Cardiac septum (tissue), 1 donor: ENCODE measurements at regions of chr9 and their contacts with region 1.

Region 1: GRCh38 chr9:114207034-114207810 is 51.9 kb downstream of the COL27A1 start:
- DNase-seq: peak; percentile 82

Region 2: DNA sequence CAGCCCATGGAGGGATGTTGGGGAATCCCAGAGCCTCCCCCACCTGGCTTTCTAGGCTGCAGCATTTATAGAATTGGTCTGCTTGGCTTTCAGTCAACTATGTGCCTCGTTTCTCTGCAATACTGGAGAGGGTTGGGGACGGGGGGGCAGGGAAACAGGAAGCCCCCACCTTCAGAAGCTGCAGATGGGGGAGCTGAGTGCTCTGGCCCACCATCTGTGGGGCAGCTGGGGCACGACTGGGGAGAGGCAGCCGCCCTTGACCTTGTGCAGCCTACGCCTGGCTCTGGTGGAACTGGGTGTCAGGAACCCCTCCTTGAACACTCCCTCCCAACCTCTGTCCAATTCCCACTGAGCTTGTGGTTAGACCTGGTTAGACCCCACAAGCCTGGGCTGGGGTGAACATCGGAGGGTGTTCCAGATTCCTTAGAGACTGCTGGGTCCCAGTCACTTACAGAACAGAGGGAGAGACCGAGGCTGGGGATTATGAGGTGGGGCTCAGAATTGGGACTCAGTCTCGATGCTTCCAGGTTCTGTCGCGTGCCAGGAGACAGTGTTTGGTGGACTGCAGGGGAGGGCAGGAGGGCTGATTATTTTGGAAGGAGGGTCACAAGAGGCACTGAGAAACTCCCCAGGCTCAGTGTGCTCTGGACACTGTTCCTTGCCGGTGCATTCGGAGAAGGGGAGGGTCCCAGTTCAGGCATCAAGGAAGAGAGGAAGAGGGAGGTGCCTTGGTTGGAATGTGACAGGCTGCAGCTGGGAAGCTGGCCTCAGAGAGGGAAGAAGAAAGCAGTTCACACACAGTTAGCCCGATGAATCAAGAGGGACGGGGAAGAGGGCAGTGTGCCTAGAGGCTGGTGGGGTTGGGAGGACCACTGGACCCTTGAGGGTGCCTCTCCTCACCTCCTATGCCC is 26.3 kb before region 1 on chr9:
- intact Hi-C with region 1: loop called (anchors 1 kb)
- DNase-seq: no peak

Region 3: GRCh38 chr9:114250235-114250568 is 43.0 kb after region 1 on chr9:
- intact Hi-C with region 1: loop called (anchors 1 kb)
- DNase-seq: peak; percentile 84

Region 4: GRCh38 chr9:114271641-114272081 is 64.4 kb after region 1 on chr9:
- intact Hi-C with region 1: no loop called
- DNase-seq: no peak

Region 5: DNA sequence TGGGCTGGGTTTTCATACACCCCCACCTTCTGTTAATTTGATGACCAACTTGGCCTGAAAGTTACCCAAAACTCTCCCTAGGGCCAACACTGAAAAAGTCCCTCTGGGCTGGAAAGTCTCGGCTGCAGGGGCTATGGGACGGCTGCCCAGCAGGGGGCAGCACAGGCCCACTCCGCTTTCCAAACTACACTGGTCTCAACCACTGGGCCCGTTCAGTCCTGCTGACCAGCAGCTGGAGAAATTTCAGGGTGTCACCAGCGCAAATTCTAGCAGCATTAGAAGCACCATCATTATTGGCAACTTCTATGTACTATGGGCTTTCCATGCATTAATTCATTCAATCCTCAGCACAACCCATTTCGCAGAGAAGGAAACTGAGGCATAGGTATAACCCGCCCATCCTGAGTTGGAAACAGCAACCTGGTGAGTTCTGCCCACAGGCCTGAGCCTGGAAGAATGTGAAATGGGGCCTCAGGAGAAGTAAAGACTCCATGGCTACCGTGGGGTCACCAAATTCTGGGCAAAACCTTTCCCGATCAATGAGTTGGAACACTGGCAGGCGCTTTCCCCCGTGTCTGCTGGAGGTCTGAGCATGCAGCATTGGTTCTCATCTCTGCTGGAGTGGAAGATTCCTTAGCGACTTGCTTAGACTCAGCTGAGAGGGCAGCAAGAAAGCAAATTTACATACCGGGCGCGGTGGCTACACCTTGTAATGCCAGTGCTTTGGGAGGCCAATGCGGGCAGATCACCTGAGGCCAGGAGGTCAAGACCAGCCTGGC is 132.1 kb after region 1 on chr9:
- intact Hi-C with region 1: no loop called
- DNase-seq: no peak

Region 6: DNA sequence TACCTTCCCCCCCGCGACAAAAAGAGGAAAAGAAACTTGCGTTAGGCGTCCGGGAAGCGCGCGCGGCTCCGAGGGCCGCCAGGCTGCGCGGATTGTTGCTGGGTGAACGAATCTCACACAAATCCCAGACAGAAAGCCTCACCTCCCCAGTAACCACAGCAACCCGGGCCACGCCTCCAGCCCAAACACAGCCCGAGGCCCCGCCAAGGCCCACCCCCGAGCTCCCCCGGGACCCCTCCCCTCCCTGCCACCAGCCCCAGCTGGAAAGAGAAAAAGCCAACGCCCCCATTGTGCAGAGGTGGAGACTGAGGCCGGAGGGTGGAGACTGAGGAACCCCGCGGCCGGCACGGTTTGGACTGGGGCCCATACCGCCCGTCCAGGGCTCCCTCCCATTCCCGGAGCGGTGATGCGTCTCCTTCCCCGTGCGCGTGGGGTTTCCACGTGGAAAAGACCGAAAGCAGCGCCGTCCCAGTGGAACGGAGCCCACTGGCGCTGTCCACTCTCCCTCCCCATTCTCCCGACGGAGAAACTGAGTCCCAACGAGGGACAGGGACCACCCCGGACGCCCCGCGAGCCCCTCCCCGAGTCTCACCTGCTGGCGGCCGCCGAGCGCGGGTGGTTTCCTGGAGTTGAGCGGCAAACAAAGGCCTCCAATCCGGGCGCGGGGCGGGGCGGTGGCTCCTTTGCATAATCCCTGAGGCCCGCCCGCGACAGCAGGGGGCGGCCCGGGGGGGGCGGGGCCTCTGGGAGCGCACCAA is 190.8 kb after region 1 on chr9:
- intact Hi-C with region 1: no loop called
- DNase-seq: peak; percentile 98

Region 7: DNA sequence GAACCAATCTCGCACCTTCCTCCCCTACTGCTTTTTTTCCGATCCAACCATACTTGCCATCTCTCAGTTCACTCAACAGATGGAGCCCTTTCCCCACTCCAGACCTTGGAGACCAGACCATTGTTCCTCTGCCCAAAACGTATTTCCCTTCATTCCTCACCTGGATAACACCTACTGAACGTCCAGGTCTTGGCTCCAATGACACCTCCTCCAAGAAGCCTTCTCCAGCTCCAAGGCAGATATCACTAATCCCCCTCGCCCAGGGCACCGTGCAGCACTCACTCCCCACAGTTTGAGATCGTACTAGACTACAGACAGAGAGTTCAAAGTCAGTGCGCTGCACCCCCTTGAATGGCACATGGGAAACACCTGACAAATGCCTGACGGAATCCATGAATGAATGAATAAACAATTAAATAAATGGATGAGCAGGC is 227.7 kb after region 1 on chr9:
- intact Hi-C with region 1: no loop called
- DNase-seq: no peak